HEK293 (cell line): ENCODE measurements at regions of chr15 and their contacts with region 1.

Region 1: GRCh38 chr15:45714590-45715488 is 80.0 kb downstream of the SQOR start:
- H3K4me3 ChIP-seq: no peak overlapping the region
- H3K27ac ChIP-seq: no peak overlapping the region
- H3K4me1 ChIP-seq: no peaks in the 10 kb centered on the region
- CTCF ChIP-seq: peak; percentile 54; the same call in 1 of the 2 replicates

Region 2: DNA sequence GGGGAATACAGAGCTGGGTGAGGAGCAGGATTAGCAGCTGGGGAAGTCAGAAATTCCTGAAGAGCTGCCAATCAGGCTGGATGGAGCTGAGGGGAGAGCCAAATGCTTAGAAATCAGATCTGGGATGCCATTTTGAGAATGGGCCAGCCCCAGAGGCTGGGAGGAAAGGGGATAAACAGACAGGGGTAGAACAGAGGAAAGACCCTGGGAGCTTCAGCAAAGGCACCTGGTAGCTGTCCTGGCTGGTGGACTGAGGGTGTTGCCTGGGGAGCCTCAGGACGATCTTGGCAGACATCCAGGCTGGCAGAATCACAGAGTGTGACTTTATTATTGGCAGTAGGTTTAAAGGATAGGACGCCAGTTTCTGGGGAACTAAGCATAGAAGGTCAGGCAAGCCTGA is 17.8 kb after region 1 on chr15:
- CTCF ChIA-PET with region 1: interaction called, 10 read pairs
- POLR2A ChIA-PET with region 1: no interaction called
- H3K4me3 ChIP-seq: no peak overlapping the region
- H3K27ac ChIP-seq: no peak overlapping the region
- H3K4me1 ChIP-seq: no peaks in the 10 kb centered on the region
- CTCF ChIP-seq: no peak

Region 3: DNA sequence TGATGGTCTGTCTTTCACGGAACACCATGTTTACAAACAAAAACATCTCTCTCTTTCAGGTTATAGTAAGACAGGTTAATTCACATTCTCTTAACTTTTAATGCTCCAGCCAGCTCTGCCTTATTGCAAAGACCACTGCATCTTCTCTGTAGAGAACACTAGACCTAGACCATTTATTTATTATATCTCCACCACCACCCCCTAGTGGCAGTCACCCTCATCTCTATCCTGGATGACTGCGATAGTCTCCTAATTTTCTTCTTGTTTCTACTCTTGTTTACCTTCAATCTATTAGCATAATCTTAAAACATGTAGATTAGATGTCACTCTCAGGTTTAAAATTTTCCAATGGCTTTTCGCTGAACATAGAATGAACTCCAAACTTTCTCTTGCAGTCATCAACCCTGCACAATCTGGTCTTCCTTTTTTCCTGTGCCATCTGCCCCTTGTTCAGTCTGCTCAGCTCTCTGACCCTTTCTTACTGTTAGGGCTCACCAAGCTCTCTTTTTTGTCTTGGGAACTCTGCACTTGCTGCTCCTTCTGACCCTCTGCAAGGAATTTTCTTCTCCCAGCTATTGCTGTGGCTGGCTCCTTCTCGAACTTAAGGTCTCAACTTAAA is 75.6 kb after region 1 on chr15:
- CTCF ChIA-PET with region 1: interaction called, 26 read pairs
- POLR2A ChIA-PET with region 1: no interaction called
- H3K4me3 ChIP-seq: no peak overlapping the region
- H3K27ac ChIP-seq: no peak overlapping the region
- H3K4me1 ChIP-seq: no peaks in the 10 kb centered on the region
- CTCF ChIP-seq: no peak